ENCODE measurements at regions of chr1 and their contacts with region 1.

Region 1: DNA sequence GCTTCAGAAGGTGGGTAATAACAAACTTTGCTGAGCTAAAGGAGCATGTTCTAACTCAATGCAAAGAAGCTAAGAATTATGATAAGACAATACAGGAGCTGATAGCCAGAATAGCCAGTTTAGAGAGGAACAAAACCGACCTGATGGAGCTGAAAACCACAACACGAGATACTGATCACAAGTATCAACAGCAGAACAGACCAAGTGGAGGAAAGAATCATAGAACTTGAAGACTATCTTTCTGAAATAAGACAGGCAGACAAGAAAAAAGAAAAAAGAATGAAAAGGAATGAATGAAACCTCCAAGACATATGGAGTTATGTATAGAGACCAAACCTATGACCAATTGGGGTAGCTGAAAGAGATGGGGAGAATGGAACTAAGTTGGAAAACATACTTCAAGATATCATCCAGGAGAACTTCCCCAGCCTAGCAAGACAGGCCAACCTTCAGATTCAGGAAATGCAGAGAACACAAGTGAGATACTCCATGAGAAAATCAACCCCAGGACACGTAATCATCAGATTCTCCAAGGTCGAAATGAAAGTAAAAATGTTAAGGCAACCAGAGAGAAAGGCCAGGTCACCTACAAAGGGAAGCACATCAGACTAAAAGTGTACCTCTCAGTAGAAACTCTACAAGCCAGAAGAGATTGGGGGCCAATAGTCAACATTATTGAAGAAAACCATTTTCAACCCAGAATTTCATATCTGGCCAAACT is 20.5 kb downstream of the CD84 start:
- DNase-seq: no peak
- H3K4me3 Mint-ChIP-seq: peak overlapping the region; percentile 11
- H3K27ac Mint-ChIP-seq: peak overlapping the region; percentile 20
- H3K4me1 Mint-ChIP-seq: peaks cover 48% of the 10 kb centered on the region
- H3K27me3 Mint-ChIP-seq: no peaks in the 10 kb centered on the region

Region 2: DNA sequence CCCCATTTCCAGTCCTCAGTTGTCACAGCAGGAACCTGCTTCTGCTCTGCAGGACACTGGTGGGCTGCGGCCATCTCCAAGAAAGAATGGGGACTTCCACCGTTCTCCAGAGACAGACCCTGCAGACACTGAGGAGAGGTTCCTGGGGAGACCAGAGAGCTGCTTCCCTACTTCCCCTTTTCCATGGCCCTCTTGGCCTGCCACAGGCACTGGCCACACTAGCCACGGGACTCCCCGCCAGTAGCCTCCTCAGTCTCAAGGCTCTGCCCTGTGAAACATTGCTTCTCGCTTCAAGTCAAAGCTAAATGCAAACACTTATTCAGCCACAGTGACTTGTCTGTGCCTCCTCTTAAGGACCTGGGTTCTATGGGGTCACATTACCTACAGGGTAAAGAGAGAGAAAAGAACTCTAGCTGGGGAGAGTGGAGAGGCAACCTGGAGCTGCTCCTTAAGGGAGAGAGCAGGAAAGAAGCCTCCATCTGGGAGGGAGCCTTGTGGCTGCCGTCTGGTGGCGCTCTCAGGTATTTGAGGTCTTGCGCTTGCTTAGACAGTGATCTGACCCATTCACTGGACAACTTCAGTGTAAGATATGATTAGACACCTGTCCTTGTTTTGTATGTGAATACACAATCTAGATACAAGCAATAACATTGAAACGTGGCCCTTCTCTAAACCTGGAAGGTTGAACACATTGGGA is 737.5 kb before region 1 on chr1:
- CTCF ChIA-PET with region 1: no interaction called
- intact Hi-C with region 1: no loop called
- DNase-seq: no peak
- H3K4me3 Mint-ChIP-seq: no peak overlapping the region
- H3K27ac Mint-ChIP-seq: no peak overlapping the region
- H3K4me1 Mint-ChIP-seq: peaks cover 23% of the 10 kb centered on the region
- H3K27me3 Mint-ChIP-seq: no peaks in the 10 kb centered on the region

Region 3: DNA sequence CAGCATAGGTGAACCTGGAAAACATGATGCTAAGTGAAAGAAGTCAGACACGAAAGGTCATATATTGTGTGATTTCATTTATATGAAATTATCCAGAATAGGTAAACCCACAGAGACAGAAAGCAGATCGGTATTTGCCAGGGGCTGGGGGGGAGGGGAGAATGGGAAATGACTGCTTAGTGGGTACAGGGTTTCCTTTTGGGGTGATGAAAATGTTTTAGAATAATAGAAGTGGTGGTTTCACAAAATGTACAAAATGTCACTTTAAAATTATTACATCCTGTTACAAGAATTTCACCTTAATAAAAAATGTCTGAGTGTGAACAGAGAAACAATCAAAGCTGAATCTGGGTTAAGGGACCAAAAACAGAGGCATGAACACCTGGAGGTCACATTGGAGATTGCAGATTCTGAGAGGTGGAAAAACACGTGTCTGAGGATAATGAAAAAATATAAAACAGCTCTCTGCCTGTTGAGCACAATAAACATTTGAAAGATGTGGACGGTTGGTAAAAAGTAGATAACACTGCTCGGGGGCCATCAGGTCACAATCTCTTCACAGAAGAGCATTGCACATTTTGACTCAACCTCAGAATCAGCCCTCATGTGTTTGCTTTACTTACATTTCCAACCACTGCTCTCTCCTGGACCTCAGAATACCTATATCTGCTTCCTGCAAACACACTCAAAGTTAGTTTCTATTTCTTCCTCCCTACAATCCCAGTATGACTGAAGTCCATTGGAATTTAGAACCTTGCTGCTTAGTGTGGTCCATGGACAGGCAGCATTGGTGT is 39.0 kb before region 1 on chr1:
- CTCF ChIA-PET with region 1: no interaction called
- intact Hi-C with region 1: no loop called
- DNase-seq: peak; percentile 60
- H3K4me3 Mint-ChIP-seq: peak overlapping the region; percentile 85
- H3K27ac Mint-ChIP-seq: peak overlapping the region; percentile 97
- H3K4me1 Mint-ChIP-seq: peaks cover 71% of the 10 kb centered on the region
- H3K27me3 Mint-ChIP-seq: no peaks in the 10 kb centered on the region

Region 4: DNA sequence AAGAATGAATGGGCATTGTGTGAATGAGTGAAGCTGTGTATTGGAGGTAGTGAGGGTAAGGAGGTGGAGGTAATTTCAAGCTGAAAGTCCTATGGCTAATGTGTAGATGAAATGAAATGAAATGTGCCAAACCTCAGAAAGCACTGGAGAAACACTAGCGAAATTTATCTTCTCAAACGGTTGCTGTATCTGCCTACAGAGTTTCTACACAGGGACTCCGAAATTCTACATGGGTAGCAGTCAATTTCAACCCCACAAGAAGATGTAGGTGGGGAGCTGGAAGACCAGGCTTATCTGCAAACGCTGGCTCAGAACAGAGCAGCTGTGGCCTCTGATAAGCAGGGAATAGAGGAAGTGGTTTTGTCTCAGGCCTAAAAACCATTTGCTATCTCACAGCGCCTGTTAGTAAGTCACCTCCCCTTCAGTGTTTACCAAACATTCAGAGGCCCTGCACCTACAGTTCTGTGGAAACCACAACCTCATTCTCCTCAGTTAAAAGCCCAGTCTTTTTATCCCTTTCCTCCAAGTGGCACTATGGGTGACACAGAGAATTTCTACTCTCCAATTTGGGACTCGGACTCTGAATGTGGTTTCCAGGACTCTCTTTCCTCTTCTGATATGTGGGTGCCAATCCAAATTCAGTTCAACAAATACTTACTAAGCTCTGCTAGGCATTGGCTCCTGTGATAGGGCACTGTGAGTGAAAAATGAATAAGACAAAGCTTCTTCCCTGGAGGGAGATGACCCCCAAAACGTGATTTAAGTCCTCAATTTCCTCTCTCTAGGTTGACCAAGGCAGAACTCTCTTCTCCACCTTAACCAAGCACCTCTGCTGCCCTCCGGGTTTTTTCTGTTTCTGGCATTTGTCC is 18.6 kb before region 1 on chr1:
- CTCF ChIA-PET with region 1: interaction called, 37 read pairs
- intact Hi-C with region 1: no loop called
- DNase-seq: peak; percentile 73
- H3K4me3 Mint-ChIP-seq: peak overlapping the region; percentile 52
- H3K27ac Mint-ChIP-seq: peak overlapping the region; percentile 96
- H3K4me1 Mint-ChIP-seq: peaks cover 55% of the 10 kb centered on the region
- H3K27me3 Mint-ChIP-seq: no peaks in the 10 kb centered on the region

Region 5: GRCh38 chr1:160813215-160813614 is 254.4 kb after region 1 on chr1:
- CTCF ChIA-PET with region 1: no interaction called
- intact Hi-C with region 1: no loop called
- DNase-seq: peak; percentile 34
- H3K4me3 Mint-ChIP-seq: no peak overlapping the region
- H3K27ac Mint-ChIP-seq: peak overlapping the region; percentile 47
- H3K4me1 Mint-ChIP-seq: peaks cover 44% of the 10 kb centered on the region
- H3K27me3 Mint-ChIP-seq: no peaks in the 10 kb centered on the region

Region 6: GRCh38 chr1:161335796-161336195 is 777.0 kb after region 1 on chr1:
- CTCF ChIA-PET with region 1: no interaction called
- intact Hi-C with region 1: no loop called
- DNase-seq: no peak
- H3K4me3 Mint-ChIP-seq: no peak overlapping the region
- H3K27ac Mint-ChIP-seq: no peak overlapping the region
- H3K4me1 Mint-ChIP-seq: peaks cover 2% of the 10 kb centered on the region
- H3K27me3 Mint-ChIP-seq: no peaks in the 10 kb centered on the region

Measured in activated naive CD4-positive, alpha-beta T cell treated with anti-CD3 and anti-CD28 coated beads for 36 hours (primary cell).